Activated naive CD4-positive, alpha-beta T cell treated with anti-CD3 and anti-CD28 coated beads for 36 hours (primary cell): ENCODE measurements at regions of chr15 and their contacts with region 1.

Region 1: GRCh38 chr15:41180206-41180789 is 50.3 kb downstream of the EXD1 start:
- DNase-seq: no peak
- H3K4me3 Mint-ChIP-seq: no peak overlapping the region
- H3K27ac Mint-ChIP-seq: no peak overlapping the region
- H3K4me1 Mint-ChIP-seq: no peaks in the 10 kb centered on the region
- H3K27me3 Mint-ChIP-seq: no peaks in the 10 kb centered on the region

Region 2: DNA sequence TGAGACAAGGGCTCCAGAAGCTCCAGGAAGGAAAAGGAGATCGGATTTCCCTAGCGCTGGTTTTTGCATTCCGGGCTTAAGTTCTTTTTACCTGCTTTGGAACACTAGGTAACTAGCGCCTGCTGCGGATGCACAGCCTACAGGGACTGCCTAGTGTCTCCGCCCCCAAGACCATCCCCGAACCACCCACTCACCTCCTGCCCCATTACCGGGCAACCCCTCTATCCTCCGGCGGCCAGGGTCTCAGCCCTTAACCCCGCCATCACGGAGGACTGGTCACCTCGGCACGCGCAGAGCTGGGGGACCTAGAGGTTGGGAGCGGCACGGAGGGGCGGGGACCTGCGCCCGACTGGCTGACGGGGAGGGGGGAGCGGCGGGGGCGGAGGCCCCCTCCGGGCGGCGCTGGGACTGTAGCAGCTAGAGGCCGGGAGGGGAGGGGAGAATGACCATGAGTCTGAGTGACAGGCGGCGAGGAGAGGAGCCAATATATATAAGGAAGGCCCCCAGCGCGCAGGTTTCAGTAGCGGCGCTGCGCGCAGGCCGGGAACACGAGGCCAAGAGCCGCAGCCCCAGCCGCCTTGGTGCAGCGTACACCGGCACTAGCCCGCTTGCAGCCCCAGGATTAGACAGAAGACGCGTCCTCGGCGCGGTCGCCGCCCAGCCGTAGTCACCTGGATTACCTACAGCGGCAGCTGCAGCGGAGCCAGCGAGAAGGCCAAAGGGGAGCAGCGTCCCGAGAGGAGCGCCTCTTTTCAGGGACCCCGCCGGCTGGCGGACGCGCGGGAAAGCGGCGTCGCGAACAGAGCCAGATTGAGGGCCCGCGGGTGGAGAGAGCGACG is 251.3 kb before region 1 on chr15 and contains the start of gene DLL4:
- CTCF ChIA-PET with region 1: interaction called, 4 read pairs
- intact Hi-C with region 1: loop called (anchors 10 kb)
- DNase-seq: peak; percentile 35
- H3K4me3 Mint-ChIP-seq: peak within 1 kb of the TSS; percentile 54
- H3K27ac Mint-ChIP-seq: no peak within 1 kb of the TSS
- H3K4me1 Mint-ChIP-seq: peaks cover 40% of the 10 kb centered on the region
- H3K27me3 Mint-ChIP-seq: peaks cover 66% of the 10 kb centered on the region
- total RNA-seq, gene DLL4: 0.14 TPM in 1 of 2 experiments, not detected in the other

Region 3: GRCh38 chr15:41169781-41170180 is 10.5 kb before region 1 on chr15:
- CTCF ChIA-PET with region 1: interaction called, 14 read pairs
- intact Hi-C with region 1: no loop called
- DNase-seq: no peak
- H3K4me3 Mint-ChIP-seq: no peak overlapping the region
- H3K27ac Mint-ChIP-seq: no peak overlapping the region
- H3K4me1 Mint-ChIP-seq: no peaks in the 10 kb centered on the region
- H3K27me3 Mint-ChIP-seq: no peaks in the 10 kb centered on the region

Region 4: DNA sequence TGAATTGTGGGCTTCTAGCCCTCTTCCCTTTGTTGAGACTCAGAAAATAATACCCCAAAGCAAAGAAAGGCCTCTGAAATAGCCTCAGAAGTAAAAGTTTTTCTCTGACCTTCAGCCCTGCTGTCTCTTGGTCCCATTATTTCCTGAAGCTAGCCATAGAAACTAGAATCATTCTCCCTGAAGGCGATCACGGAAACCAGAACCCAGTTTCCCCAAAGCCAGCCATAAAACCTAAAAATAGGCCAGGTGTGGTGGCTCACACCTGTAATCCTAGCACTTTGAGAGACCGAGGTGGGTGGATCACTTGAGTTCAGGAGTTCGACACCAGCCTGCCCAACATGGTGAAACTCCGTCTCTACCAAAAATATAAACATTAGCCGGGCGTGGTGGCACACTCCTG is 23.1 kb after region 1 on chr15:
- CTCF ChIA-PET with region 1: interaction called, 10 read pairs
- intact Hi-C with region 1: no loop called
- DNase-seq: no peak
- H3K4me3 Mint-ChIP-seq: no peak overlapping the region
- H3K27ac Mint-ChIP-seq: no peak overlapping the region
- H3K4me1 Mint-ChIP-seq: no peaks in the 10 kb centered on the region
- H3K27me3 Mint-ChIP-seq: peaks cover 2% of the 10 kb centered on the region